Activated B cell treated with CpG ODN at 0.5 μM for 24 hours (primary cell): ENCODE measurements at regions of chr13 and their contacts with region 1.

Region 1: GRCh38 chr13:30395192-30396084 is 26.9 kb upstream of the UBE2L5 start:
- DNase-seq: peak; percentile 52
- ATAC-seq: peak; percentile 78
- H3K4me3 Mint-ChIP-seq: peak overlapping the region; percentile 97
- H3K27ac Mint-ChIP-seq: peak overlapping the region; percentile 91
- H3K4me1 Mint-ChIP-seq: peaks cover 29% of the 10 kb centered on the region
- H3K27me3 Mint-ChIP-seq: no peaks in the 10 kb centered on the region
- CTCF ChIP-seq: no peak

Region 2: GRCh38 chr13:30006246-30006645 is 389.2 kb before region 1 on chr13:
- CTCF ChIA-PET with region 1: no interaction called
- POLR2A ChIA-PET with region 1: no interaction called
- intact Hi-C with region 1: no loop called
- DNase-seq: no peak
- ATAC-seq: no peak
- H3K4me3 Mint-ChIP-seq: no peak overlapping the region
- H3K27ac Mint-ChIP-seq: no peak overlapping the region
- H3K4me1 Mint-ChIP-seq: no peaks in the 10 kb centered on the region
- H3K27me3 Mint-ChIP-seq: peaks cover 18% of the 10 kb centered on the region
- CTCF ChIP-seq: no peak

Region 3: GRCh38 chr13:30306762-30307193 is 88.7 kb before region 1 on chr13:
- CTCF ChIA-PET with region 1: no interaction called
- POLR2A ChIA-PET with region 1: interaction called, 10 read pairs
- intact Hi-C with region 1: no loop called
- DNase-seq: peak; percentile 86
- ATAC-seq: peak; percentile 86
- H3K4me3 Mint-ChIP-seq: peak overlapping the region; percentile 90
- H3K27ac Mint-ChIP-seq: peak overlapping the region; percentile 85
- H3K4me1 Mint-ChIP-seq: peaks cover 72% of the 10 kb centered on the region
- H3K27me3 Mint-ChIP-seq: no peaks in the 10 kb centered on the region
- CTCF ChIP-seq: no peak

Region 4: DNA sequence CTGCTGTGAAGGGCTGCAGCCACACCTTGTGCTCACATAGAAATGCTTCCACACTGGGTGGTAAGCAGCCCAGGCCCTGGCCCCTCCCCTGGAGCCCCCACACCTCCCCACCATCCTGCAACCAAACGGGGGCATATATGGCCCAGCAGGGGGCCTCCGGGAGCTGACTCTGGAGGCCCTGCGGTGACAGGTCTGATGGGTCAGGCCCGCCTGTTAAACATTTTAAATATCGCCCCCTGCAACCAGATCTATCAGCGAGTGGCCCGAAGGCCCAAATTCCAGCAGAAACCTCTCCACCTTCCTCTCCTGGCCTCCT is 40.1 kb before region 1 on chr13:
- CTCF ChIA-PET with region 1: interaction called, 3 read pairs
- POLR2A ChIA-PET with region 1: interaction called, 6 read pairs
- intact Hi-C with region 1: loop called (anchors 1 kb)
- DNase-seq: peak; percentile 61
- ATAC-seq: peak; percentile 100
- H3K4me3 Mint-ChIP-seq: peak overlapping the region; percentile 45
- H3K27ac Mint-ChIP-seq: peak overlapping the region; percentile 77
- H3K4me1 Mint-ChIP-seq: peaks cover 32% of the 10 kb centered on the region
- H3K27me3 Mint-ChIP-seq: no peaks in the 10 kb centered on the region
- CTCF ChIP-seq: no peak

Region 5: DNA sequence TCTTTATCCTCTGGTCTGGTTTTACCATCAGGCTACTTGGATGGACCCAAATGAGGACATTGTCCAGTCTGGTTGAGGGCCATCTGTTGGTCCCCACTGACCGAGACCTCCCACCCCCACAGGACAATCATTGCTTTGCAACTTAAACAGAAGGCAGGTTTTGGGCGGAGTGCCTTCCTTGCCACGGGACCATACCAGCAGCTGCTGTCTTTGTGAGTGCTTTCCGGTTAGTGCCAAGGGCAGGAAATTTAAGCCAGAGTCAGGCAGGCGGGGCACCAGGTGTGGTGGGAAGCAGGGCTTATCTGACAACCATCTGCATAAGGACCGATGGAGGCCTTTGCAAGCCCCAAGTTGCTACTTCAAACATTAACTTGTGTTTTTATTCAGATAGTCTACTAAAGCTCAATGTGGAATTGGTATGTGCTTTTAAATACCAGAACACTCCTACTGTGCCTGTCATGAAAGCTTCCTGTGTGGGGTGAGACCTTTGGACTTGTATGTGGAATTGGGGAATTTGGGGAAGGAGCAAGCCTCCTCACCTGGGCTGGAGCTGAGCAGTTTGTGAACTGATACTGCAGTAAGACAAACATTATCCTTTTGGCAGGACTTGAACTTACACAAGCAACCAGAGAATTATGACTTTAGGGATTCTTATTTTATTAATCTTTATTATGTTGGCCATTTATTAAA is 12.5 kb before region 1 on chr13:
- CTCF ChIA-PET with region 1: interaction called, 4 read pairs
- POLR2A ChIA-PET with region 1: interaction called, 14 read pairs
- intact Hi-C with region 1: no loop called
- DNase-seq: no peak
- ATAC-seq: no peak
- H3K4me3 Mint-ChIP-seq: no peak overlapping the region
- H3K27ac Mint-ChIP-seq: no peak overlapping the region
- H3K4me1 Mint-ChIP-seq: peaks cover 12% of the 10 kb centered on the region
- H3K27me3 Mint-ChIP-seq: no peaks in the 10 kb centered on the region
- CTCF ChIP-seq: no peak

Region 6: DNA sequence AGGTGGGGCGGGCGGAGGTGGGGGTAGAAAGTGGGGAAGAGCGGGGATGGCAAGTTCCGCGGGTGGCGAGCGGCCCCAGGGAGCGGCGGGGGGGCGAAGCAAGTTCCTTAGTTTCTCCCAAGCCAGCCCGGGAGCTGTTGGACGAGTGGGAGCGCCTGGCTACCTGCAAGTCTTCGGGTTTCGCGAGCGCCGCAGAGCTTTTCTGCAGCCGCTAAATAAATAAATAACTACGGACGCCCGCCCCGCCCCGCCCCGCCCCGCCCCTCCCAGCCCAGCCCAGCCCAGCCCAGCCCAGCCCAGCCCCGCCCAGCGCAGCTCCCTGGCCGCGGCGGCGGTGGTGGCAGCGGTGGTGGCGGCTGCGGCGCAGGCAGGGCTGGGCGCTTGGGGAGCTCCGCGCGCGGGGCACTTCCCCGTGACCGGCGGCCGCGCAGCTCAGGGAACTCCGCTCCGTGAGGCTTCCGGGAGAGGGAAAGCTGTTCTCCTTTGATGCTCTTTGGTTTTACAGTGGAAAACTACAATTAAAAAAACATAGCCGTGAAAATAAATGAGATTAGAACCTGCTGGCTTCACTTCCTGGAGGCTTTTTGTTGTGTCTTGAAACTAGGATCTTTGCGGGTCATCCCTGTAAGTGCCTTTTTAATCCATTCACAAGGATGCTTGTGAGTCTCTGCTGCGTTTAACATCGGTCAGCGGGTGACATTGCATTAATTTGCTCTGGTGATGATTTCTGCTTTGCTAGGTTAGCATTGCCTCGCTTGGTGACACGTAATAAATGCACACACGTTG is 26.8 kb after region 1 on chr13 and contains the start of gene UBE2L5:
- CTCF ChIA-PET with region 1: interaction called, 3 read pairs
- POLR2A ChIA-PET with region 1: interaction called, 19 read pairs
- intact Hi-C with region 1: no loop called
- DNase-seq: peak; percentile 75
- ATAC-seq: peak; percentile 94
- H3K4me3 Mint-ChIP-seq: peak within 1 kb of the TSS; percentile 88
- H3K27ac Mint-ChIP-seq: peak within 1 kb of the TSS; percentile 94
- H3K4me1 Mint-ChIP-seq: peaks cover 43% of the 10 kb centered on the region
- H3K27me3 Mint-ChIP-seq: no peaks in the 10 kb centered on the region
- CTCF ChIP-seq: no peak
- total RNA-seq, gene UBE2L5: 0.24 and 0.42 TPM in 2 replicates

Region 7: DNA sequence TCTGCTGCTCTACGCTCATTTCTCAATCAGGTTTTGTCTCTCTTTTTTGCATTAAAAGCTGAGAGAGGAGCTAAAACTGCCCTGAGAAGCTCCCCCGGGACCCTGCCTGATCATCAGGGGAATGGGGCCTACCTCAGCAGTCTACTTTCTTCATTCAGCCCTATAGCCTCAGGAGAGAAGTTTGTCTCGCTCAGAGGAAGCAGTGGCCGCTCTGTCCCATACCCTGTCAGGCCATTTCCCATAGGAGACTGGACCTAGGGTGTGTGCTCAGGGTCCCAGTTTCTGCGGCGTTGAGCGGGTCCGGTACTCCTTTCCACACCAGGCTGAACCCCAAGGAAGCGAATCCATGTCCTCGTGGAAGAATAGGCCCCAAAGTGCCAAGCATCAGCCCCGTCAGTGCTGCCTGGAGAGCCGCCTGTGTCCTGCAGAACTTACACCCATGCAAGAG is 48.5 kb after region 1 on chr13:
- CTCF ChIA-PET with region 1: no interaction called
- POLR2A ChIA-PET with region 1: interaction called, 27 read pairs
- intact Hi-C with region 1: no loop called
- DNase-seq: peak; percentile 76
- ATAC-seq: peak; percentile 88
- H3K4me3 Mint-ChIP-seq: peak overlapping the region; percentile 79
- H3K27ac Mint-ChIP-seq: peak overlapping the region; percentile 97
- H3K4me1 Mint-ChIP-seq: peaks cover 72% of the 10 kb centered on the region
- H3K27me3 Mint-ChIP-seq: no peaks in the 10 kb centered on the region
- CTCF ChIP-seq: no peak